Caco-2 (cell line): ENCODE measurements at regions of chr10 and their contacts with region 1.

Region 1: DNA sequence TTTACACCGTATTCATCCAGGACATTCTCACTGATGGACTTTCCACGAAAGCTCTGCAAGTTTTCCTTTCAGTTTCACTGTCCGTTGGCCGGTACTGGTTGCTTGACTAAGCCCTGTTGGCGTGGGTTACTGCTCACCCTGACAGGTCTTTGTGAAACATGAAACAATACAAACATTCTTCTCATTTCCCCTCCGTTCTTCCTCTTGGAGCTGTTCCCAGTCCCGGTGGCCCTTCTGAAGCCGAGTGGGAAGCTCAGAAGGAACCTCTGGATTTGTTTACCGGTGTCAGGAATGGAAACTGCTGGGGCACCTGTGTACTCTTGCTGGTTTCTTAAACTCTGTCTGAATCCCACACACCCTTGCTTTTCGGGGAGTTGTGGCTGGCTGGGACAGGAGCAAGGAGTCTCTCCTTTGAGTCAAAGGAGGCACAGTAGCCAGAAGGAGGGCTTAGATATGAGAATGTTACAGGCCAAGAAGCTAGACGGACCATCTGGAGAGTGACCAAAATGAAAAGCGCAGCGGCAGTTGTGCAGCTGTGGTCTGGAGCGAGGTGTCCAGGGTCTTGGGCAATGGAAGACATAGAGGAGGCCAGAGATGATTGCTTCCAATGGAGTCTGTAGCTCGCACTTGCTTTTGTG is 45.7 kb downstream of the LYZL2 start:
- DNase-seq: no peak
- H3K4me3 ChIP-seq: no peak overlapping the region
- H3K4me3 Mint-ChIP-seq: peak overlapping the region; percentile 16
- H3K27ac Mint-ChIP-seq: no peak overlapping the region
- H3K4me1 ChIP-seq: no peaks in the 10 kb centered on the region
- H3K4me1 Mint-ChIP-seq: peaks cover 6% of the 10 kb centered on the region
- H3K27me3 ChIP-seq: no peaks in the 10 kb centered on the region
- H3K27me3 Mint-ChIP-seq: no peaks in the 10 kb centered on the region
- CTCF ChIP-seq: no peak

Region 2: GRCh38 chr10:30565449-30565848 is 18.4 kb before region 1 on chr10:
- CTCF ChIA-PET with region 1: no interaction called
- POLR2A ChIA-PET with region 1: no interaction called
- intact Hi-C with region 1: loop called (anchors 2 kb)
- DNase-seq: peak; percentile 50 to 64
- H3K4me3 ChIP-seq: no peak overlapping the region
- H3K4me3 Mint-ChIP-seq: no peak overlapping the region
- H3K27ac Mint-ChIP-seq: no peak overlapping the region
- H3K4me1 ChIP-seq: no peaks in the 10 kb centered on the region
- H3K4me1 Mint-ChIP-seq: no peaks in the 10 kb centered on the region
- H3K27me3 ChIP-seq: no peaks in the 10 kb centered on the region
- H3K27me3 Mint-ChIP-seq: peaks cover 2% of the 10 kb centered on the region
- CTCF ChIP-seq: no peak

Region 3: GRCh38 chr10:30727524-30727923 is 143.6 kb after region 1 on chr10:
- CTCF ChIA-PET with region 1: no interaction called
- POLR2A ChIA-PET with region 1: no interaction called
- intact Hi-C with region 1: no loop called
- DNase-seq: peak in 1 of 2 experiments; percentile 35
- H3K4me3 ChIP-seq: no peak overlapping the region
- H3K4me3 Mint-ChIP-seq: no peak overlapping the region
- H3K27ac Mint-ChIP-seq: no peak overlapping the region
- H3K4me1 ChIP-seq: no peaks in the 10 kb centered on the region
- H3K4me1 Mint-ChIP-seq: no peaks in the 10 kb centered on the region
- H3K27me3 ChIP-seq: no peaks in the 10 kb centered on the region
- H3K27me3 Mint-ChIP-seq: peaks cover 27% of the 10 kb centered on the region
- CTCF ChIP-seq: no peak